Mammary epithelial cell (primary cell): ENCODE measurements at regions of chr5 and their contacts with region 1.

Region 1: GRCh38 chr5:112186401-112186990 is 232.6 kb downstream of the EPB41L4A start:
- DNase-seq: peak; percentile 23
- H3K4me3 ChIP-seq: no peak overlapping the region
- H3K27ac ChIP-seq: no peak overlapping the region
- H3K4me1 ChIP-seq: peaks cover 12% of the 10 kb centered on the region
- H3K27me3 ChIP-seq: no peaks in the 10 kb centered on the region
- CTCF ChIP-seq: peak; percentile 59 to 61

Region 2: GRCh38 chr5:112257976-112258375 is 71.5 kb after region 1 on chr5:
- CTCF ChIA-PET with region 1: no interaction called
- dilution Hi-C with region 1: loop called (anchors 5 kb)
- in situ Hi-C with region 1: no loop called
- intact Hi-C with region 1: no loop called
- DNase-seq: no peak
- H3K4me3 ChIP-seq: no peak overlapping the region
- H3K27ac ChIP-seq: no peak overlapping the region
- H3K4me1 ChIP-seq: no peaks in the 10 kb centered on the region
- H3K27me3 ChIP-seq: peaks cover 6% of the 10 kb centered on the region
- CTCF ChIP-seq: no peak

Region 3: DNA sequence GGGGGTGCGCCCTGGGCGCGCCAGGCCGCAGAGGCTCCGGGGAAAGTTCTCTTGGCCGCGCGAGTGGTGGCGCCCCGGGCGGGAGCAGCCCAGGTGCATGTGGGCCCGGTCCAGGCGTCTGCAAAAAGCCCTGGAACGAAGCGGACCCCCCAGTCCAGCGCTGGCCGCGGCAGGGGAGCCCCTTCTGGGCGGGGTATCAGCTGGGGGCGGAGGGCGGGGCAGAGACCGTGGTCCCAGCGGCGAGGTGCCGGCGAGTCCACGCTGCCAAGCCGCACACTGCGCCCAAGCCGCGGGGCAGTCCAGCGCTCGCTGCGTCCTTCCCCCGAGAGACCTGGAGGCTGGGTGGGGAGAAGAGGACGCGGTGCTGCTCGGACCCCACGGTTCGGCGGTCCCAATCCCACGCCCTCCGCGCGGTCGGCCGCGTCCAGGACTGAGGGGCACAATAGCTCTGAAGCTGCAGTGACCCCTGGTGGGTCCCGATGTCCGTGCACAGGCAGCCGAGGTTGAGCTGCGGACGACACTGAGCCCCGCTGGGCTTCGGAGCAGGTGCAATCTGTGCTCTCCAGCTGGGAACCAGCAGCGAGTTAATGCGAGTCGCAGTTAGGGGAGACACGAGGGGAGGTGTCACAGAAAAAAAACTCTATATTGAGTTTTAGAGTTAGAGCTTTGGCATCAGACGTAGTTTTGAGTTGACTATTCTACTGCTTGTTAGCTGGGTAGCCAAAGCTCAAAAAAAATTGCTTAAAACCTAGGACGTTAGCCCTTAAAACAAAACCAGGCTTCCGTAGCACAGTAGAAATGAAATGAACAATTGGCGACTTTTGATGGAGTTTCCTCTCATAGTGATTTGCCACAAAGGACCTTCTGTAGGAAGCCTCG is 233.7 kb after region 1 on chr5:
- CTCF ChIA-PET with region 1: no interaction called
- dilution Hi-C with region 1: no loop called
- in situ Hi-C with region 1: loop called in 1 of 2 experiments (anchors 10 kb)
- intact Hi-C with region 1: no loop called
- DNase-seq: peak; percentile 60
- H3K4me3 ChIP-seq: peak overlapping the region; percentile 52 to 57 (median 56)
- H3K27ac ChIP-seq: no peak overlapping the region
- H3K4me1 ChIP-seq: peaks cover 17% of the 10 kb centered on the region
- H3K27me3 ChIP-seq: peaks cover 18% of the 10 kb centered on the region
- CTCF ChIP-seq: peak; percentile 56 to 79